SK-N-SH (cell line): ENCODE measurements at regions of chr6 and their contacts with region 1.

Region 1: GRCh38 chr6:30541515-30542403 is 14.5 kb downstream of the GNL1 start:
- DNase-seq: peak; percentile 66
- H3K4me3 ChIP-seq: peak overlapping the region; percentile 39 to 55
- H3K27ac ChIP-seq: no peak overlapping the region
- H3K4me1 ChIP-seq: peaks cover 3 to 5% of the 10 kb centered on the region in 2 experiments; a peak in 1 of 4 replicates
- H3K27me3 ChIP-seq: no peaks in the 10 kb centered on the region
- CTCF ChIP-seq: peak; percentile 99
- EP300 ChIP-seq: no peak
- RAD21 ChIP-seq: peak; percentile 73

Region 2: GRCh38 chr6:30234356-30234755 is 307.4 kb before region 1 on chr6:
- CTCF ChIA-PET with region 1: no interaction called
- POLR2A ChIA-PET with region 1: no interaction called
- DNase-seq: no peak
- H3K4me3 ChIP-seq: no peak overlapping the region
- H3K27ac ChIP-seq: no peak overlapping the region
- H3K4me1 ChIP-seq: no peaks in the 10 kb centered on the region
- H3K27me3 ChIP-seq: no peaks in the 10 kb centered on the region
- CTCF ChIP-seq: no peak
- EP300 ChIP-seq: no peak
- RAD21 ChIP-seq: no peak

Region 3: DNA sequence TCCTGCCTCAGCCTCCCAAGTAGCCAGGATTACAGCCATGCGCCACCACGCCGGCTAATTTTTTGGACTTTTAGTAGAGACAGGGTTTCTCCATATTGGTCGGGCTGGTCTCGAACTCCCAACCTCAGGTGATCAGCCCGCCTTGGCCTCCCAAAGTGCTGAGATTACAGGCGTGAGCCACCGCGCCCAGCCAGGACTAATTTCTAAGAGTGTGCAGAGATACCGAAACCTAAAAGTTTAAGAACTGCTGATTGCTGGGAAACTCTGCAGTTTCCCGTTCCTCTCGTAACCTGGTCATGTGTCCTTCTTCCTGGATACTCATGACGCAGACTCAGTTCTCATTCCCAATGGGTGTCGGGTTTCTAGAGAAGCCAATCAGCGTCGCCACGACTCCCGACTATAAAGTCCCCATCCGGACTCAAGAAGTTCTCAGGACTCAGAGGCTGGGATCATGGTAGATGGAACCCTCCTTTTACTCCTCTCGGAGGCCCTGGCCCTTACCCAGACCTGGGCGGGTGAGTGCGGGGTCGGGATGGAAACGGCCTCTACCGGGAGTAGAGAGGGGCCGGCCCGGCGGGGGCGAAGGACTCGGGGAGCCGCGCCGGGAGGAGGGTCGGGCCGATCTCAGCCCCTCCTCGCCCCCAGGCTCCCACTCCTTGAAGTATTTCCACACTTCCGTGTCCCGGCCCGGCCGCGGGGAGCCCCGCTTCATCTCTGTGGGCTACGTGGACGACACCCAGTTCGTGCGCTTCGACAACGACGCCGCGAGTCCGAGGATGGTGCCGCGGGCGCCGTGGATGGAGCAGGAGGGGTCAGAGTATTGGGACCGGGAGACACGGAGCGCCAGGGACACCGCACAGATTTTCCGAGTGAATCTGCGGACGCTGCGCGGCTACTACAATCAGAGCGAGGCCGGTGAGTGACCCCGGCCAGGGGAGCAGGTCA is 52.4 kb before region 1 on chr6 and contains the start of gene HLA-E:
- CTCF ChIA-PET with region 1: interaction called, 203 read pairs
- POLR2A ChIA-PET with region 1: no interaction called
- DNase-seq: peak; percentile 88
- H3K4me3 ChIP-seq: peak within 1 kb of the TSS; percentile 85 to 90
- H3K27ac ChIP-seq: peak within 1 kb of the TSS; percentile 60 to 94
- H3K4me1 ChIP-seq: peaks cover 0 to 7% of the 10 kb centered on the region in 2 experiments; a peak in 1 of 4 replicates
- H3K27me3 ChIP-seq: no peaks in the 10 kb centered on the region
- CTCF ChIP-seq: no peak
- EP300 ChIP-seq: no peak
- RAD21 ChIP-seq: no peak
- polyA plus RNA-seq, gene HLA-E: 90.9 and 99.7 TPM in 2 replicates

Region 4: DNA sequence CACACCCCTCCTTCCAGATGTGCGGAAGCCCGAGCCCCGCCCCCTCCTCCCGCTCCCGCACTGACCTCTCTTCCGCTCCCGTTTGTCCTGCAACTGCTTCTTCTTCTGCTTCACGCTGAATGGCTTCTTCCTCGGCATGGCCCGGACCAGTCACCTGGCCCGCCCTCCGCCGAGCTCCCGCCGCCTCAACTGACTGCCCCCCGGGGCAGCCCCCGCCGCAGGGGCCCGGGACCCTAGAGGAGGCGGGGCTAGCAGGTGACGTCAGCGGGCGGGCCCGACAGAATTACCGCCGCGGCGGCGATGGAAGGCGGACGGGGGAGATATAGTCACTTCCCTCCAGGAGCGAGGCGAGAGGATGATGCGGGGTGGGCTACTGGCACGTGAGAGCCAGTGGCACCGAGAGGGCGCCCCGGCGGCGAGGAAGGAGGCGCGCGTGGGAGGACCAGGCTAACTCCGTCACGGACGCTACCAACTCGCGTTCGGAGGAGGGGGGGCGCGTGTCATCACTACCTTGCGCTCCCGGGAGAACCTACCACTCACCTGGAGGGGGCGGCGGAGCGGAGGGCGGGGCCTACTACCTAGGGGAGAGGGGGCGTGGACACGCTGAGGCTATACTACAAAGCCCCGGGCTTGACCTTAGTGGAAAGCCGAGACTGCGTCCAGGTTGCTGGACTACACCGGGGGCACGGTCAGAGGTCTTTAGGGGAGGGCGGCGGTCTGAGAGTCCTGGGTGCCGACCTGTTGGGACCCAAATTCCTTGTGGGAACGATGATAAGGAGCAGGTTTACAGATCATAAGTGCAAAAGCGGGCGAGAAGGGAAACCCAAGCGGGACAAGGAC is 14.5 kb after region 1 on chr6 and contains the start of gene GNL1:
- CTCF ChIA-PET with region 1: interaction called, 140 read pairs
- POLR2A ChIA-PET with region 1: interaction called, 7 read pairs
- DNase-seq: peak; percentile 92
- H3K4me3 ChIP-seq: peak within 1 kb of the TSS; percentile 93 to 99
- H3K27ac ChIP-seq: peak within 1 kb of the TSS; percentile 90 to 99
- H3K4me1 ChIP-seq: peaks cover 15 to 17% of the 10 kb centered on the region in 2 experiments
- H3K27me3 ChIP-seq: no peaks in the 10 kb centered on the region
- CTCF ChIP-seq: no peak
- EP300 ChIP-seq: no peak
- RAD21 ChIP-seq: no peak
- polyA plus RNA-seq, gene GNL1: 36.4 and 43.3 TPM in 2 replicates

Region 5: GRCh38 chr6:30571075-30571768 is 29.5 kb after region 1 on chr6 and contains the start of gene ABCF1:
- CTCF ChIA-PET with region 1: interaction called, 16 read pairs
- POLR2A ChIA-PET with region 1: interaction called, 6 read pairs
- DNase-seq: peak; percentile 97
- H3K4me3 ChIP-seq: peak within 1 kb of the TSS; percentile 61 to 81
- H3K27ac ChIP-seq: peak within 1 kb of the TSS; percentile 95 to 97
- H3K4me1 ChIP-seq: peaks cover 12 to 21% of the 10 kb centered on the region in 2 experiments; a peak in 3 of 4 replicates
- H3K27me3 ChIP-seq: no peaks in the 10 kb centered on the region
- CTCF ChIP-seq: no peak
- EP300 ChIP-seq: no peak; a peak in 2 of 4 replicates
- RAD21 ChIP-seq: no peak
- polyA plus RNA-seq, gene ABCF1: 42.5 and 53.4 TPM in 2 replicates

Region 6: GRCh38 chr6:30583921-30584320 is 42.2 kb after region 1 on chr6:
- CTCF ChIA-PET with region 1: interaction called, 17 read pairs
- POLR2A ChIA-PET with region 1: no interaction called
- DNase-seq: no peak
- H3K4me3 ChIP-seq: no peak overlapping the region
- H3K27ac ChIP-seq: no peak overlapping the region
- H3K4me1 ChIP-seq: no peaks in the 10 kb centered on the region
- H3K27me3 ChIP-seq: no peaks in the 10 kb centered on the region
- CTCF ChIP-seq: no peak
- EP300 ChIP-seq: no peak
- RAD21 ChIP-seq: no peak

Region 7: GRCh38 chr6:30600451-30600961 is 58.7 kb after region 1 on chr6:
- CTCF ChIA-PET with region 1: interaction called, 118 read pairs
- POLR2A ChIA-PET with region 1: interaction called, 4 read pairs
- DNase-seq: no peak
- H3K4me3 ChIP-seq: no peak overlapping the region
- H3K27ac ChIP-seq: 0 out of 4 replicates have a peak overlapping the region, but pooled peaks of 1 of the 2 experiments have one; percentile 13
- H3K4me1 ChIP-seq: no peaks in the 10 kb centered on the region
- H3K27me3 ChIP-seq: no peaks in the 10 kb centered on the region
- CTCF ChIP-seq: no peak
- EP300 ChIP-seq: no peak
- RAD21 ChIP-seq: no peak

Region 8: GRCh38 chr6:30926644-30927043 is 384.9 kb after region 1 on chr6:
- CTCF ChIA-PET with region 1: no interaction called
- POLR2A ChIA-PET with region 1: no interaction called
- DNase-seq: no peak
- H3K4me3 ChIP-seq: no peak overlapping the region
- H3K27ac ChIP-seq: no peak overlapping the region
- H3K4me1 ChIP-seq: no peaks in the 10 kb centered on the region
- H3K27me3 ChIP-seq: no peaks in the 10 kb centered on the region
- CTCF ChIP-seq: no peak
- EP300 ChIP-seq: no peak
- RAD21 ChIP-seq: no peak